ENCODE measurements at regions of chr1 and their contacts with region 1.

Region 1: DNA sequence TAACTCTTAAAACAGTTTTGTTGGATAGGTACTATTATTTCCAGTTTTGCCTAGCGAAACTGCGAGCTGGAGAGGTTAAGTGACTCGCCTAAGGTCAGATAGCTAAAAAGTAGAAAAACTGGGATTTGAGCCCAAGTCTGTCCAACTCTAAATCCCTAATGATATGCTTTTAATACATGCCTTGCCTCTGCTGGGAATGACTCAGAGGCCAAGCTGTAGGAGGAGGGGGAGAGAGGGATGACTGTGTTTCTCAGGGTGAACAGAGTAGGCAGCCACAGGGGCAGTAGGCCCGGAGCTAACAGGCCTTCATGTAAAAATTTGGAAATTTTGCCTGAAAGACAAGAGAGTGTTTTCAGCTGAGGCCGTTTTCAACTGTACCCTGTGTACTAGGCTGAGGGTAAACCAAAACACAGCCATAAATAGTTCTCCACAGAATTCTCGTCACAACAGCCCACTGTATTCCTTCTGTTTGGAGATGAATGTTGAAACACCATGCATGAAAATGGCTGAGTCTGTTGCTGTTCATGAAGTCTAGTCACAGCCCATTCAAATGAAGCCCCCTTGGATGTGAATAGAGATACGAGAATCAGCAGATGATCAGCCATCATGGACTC is 107.5 kb upstream of the HOOK1 start:
- DNase-seq: peak in 1 of 2 donors; percentile 51
- ATAC-seq: peak; percentile 78 to 91 (median 84)
- H3K4me3 ChIP-seq: no peak overlapping the region
- H3K27ac ChIP-seq: peak overlapping the region; percentile 7 to 87 (median 60)
- H3K4me1 ChIP-seq: peaks cover 3 to 57% (median 45%) of the 10 kb centered on the region in 9 donors
- H3K27me3 ChIP-seq: no peaks in the 10 kb centered on the region
- CTCF ChIP-seq: no peak

Region 2: GRCh38 chr1:58739856-58740466 is 967.3 kb before region 1 on chr1:
- intact Hi-C with region 1: loop called in 5 of 10 experiments (anchors 5 kb)
- DNase-seq: peak in 1 of 2 donors; percentile 52
- ATAC-seq: peak in 6 of 8 donors; percentile 49 to 76 (median 64)
- H3K4me3 ChIP-seq: no peak overlapping the region
- H3K27ac ChIP-seq: no peak overlapping the region
- H3K4me1 ChIP-seq: peaks cover 0 to 24% (median 3%) of the 10 kb centered on the region in 9 donors
- H3K27me3 ChIP-seq: no peaks in the 10 kb centered on the region
- CTCF ChIP-seq: peak; percentile 73 to 95 (median 86)

Region 3: GRCh38 chr1:58768971-58769808 is 938.1 kb before region 1 on chr1:
- intact Hi-C with region 1: loop called in 1 of 10 experiments (anchors 10 kb)
- DNase-seq: peak; percentile 85 to 86
- ATAC-seq: peak in 3 of 8 donors; percentile 30 to 42 (median 37)
- H3K4me3 ChIP-seq: no peak overlapping the region
- H3K27ac ChIP-seq: no peak overlapping the region
- H3K4me1 ChIP-seq: peaks cover 8 to 30% (median 23%) of the 10 kb centered on the region in 9 donors
- H3K27me3 ChIP-seq: no peaks in the 10 kb centered on the region
- CTCF ChIP-seq: peak; percentile 68 to 91 (median 89)

Region 4: GRCh38 chr1:58896246-58897183 is 810.8 kb before region 1 on chr1:
- intact Hi-C with region 1: loop called in 3 of 10 experiments (anchors 10 kb)
- DNase-seq: peak; percentile 60 to 73
- ATAC-seq: peak; percentile 43 to 91 (median 74)
- H3K4me3 ChIP-seq: no peak overlapping the region
- H3K27ac ChIP-seq: peak overlapping the region; percentile 52 to 93 (median 73)
- H3K4me1 ChIP-seq: peaks cover 35 to 86% (median 74%) of the 10 kb centered on the region in 9 donors
- H3K27me3 ChIP-seq: no peaks in the 10 kb centered on the region
- CTCF ChIP-seq: peak in 1 of 9 donors; percentile 18

Region 5: GRCh38 chr1:58903514-58904298 is 803.6 kb before region 1 on chr1:
- intact Hi-C with region 1: loop called in 3 of 10 experiments (anchors 10 kb)
- DNase-seq: peak; percentile 95 to 96
- ATAC-seq: peak; percentile 93 to 99 (median 96)
- H3K4me3 ChIP-seq: peak overlapping the region in 9 of 10 donors; percentile 35 to 67 (median 58)
- H3K27ac ChIP-seq: peak overlapping the region; percentile 90 to 99 (median 96)
- H3K4me1 ChIP-seq: peaks cover 5 to 43% (median 27%) of the 10 kb centered on the region in 9 donors
- H3K27me3 ChIP-seq: no peaks in the 10 kb centered on the region
- CTCF ChIP-seq: peak in 3 of 9 donors; percentile 6 to 7 (median 6)

Region 6: DNA sequence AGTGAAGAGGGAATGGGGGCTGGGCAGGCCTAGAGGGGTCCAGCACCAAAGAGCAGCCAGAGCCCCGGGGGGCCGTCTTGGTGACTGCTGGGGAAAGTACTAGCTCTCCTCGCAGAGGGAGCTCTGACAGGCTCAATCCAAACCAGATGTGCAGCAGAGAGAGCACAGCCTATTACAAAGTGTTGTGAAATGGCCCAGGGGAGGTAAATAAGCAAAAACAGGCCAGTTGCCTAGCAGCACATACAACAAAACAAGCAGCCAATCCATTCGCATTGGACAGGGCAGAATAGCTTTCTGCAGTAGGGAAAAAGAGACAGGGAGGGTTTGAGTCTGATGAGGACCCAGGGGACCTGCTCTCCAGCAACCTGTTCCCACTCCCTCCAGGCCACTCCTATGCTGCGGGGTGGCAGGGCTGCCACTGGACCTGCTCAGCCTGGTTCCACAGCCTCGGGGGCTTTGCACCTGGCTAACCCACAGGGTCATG is 650.0 kb before region 1 on chr1:
- intact Hi-C with region 1: loop called in 1 of 10 experiments (anchors 10 kb)
- DNase-seq: peak; percentile 80 to 87
- ATAC-seq: peak; percentile 89 to 93 (median 90)
- H3K4me3 ChIP-seq: no peak overlapping the region
- H3K27ac ChIP-seq: peak overlapping the region in 9 of 10 donors; percentile 6 to 66 (median 60)
- H3K4me1 ChIP-seq: peaks cover 7 to 37% (median 31%) of the 10 kb centered on the region in 9 donors
- H3K27me3 ChIP-seq: no peaks in the 10 kb centered on the region
- CTCF ChIP-seq: peak in 2 of 9 donors; percentile 30 to 32

Region 7: GRCh38 chr1:59393211-59394180 is 313.8 kb before region 1 on chr1:
- intact Hi-C with region 1: loop called in 1 of 10 experiments (anchors 10 kb)
- DNase-seq: peak; percentile 70 to 90
- ATAC-seq: peak; percentile 95 to 98 (median 98)
- H3K4me3 ChIP-seq: peak overlapping the region in 4 of 10 donors; percentile 3 to 13 (median 8)
- H3K27ac ChIP-seq: peak overlapping the region; percentile 72 to 96 (median 88)
- H3K4me1 ChIP-seq: peaks cover 6 to 44% (median 27%) of the 10 kb centered on the region in 9 donors
- H3K27me3 ChIP-seq: no peaks in the 10 kb centered on the region
- CTCF ChIP-seq: no peak

Region 8: GRCh38 chr1:59767119-59767518 is 59.8 kb after region 1 on chr1:
- intact Hi-C with region 1: no loop called
- DNase-seq: no peak
- ATAC-seq: peak in 2 of 8 donors; percentile 34 to 50
- H3K4me3 ChIP-seq: no peak overlapping the region
- H3K27ac ChIP-seq: no peak overlapping the region
- H3K4me1 ChIP-seq: peaks cover 0 to 9% (median 0%) of the 10 kb centered on the region in 9 donors
- H3K27me3 ChIP-seq: no peaks in the 10 kb centered on the region
- CTCF ChIP-seq: no peak

Measured in heart right ventricle (tissue), 16 donors.